Gastrocnemius medialis (tissue), 4 donors: ENCODE measurements at regions of chr4 and their contacts with region 1.

Region 1: DNA sequence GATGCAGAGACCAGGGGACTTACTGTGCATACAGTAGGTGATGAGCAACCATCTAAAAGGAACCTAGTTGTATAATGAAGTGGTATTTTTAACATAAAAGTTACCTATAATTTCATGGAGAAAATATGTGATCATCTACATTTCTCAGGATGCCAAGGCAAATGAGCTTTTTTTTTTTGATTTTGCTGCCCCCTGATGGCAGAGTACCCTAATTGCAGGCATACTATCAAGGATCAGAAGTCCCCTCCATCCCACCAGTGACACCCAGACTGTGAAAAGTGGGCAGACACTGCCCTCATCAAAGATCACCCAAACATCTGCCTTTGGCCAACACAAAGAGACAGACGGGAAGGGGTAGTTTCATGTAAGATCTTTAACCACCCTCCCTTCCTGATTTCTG is 9.6 kb upstream of the ABLIM2 start:
- DNase-seq: no peak
- ATAC-seq: no peak
- H3K4me3 ChIP-seq: no peak overlapping the region
- H3K27ac ChIP-seq: peak overlapping the region; percentile 86 to 99 (median 97)
- H3K4me1 ChIP-seq: peaks cover 47 to 50% of the 10 kb centered on the region in 2 donors
- H3K27me3 ChIP-seq: no peaks in the 10 kb centered on the region
- CTCF ChIP-seq: peak in 3 of 5 experiments; percentile 47 to 79 (median 79)
- POLR2A ChIP-seq: no peak

Region 2: GRCh38 chr4:8067945-8068896 is 100.0 kb before region 1 on chr4:
- in situ Hi-C with region 1: no loop called
- intact Hi-C with region 1: loop called (anchors 1 kb)
- DNase-seq: peak; percentile 45 to 78
- ATAC-seq: peak; percentile 59 to 63
- H3K4me3 ChIP-seq: no peak overlapping the region
- H3K27ac ChIP-seq: peak overlapping the region; percentile 89 to 95 (median 92)
- H3K4me1 ChIP-seq: peaks cover 29 to 37% of the 10 kb centered on the region in 2 donors
- H3K27me3 ChIP-seq: no peaks in the 10 kb centered on the region
- CTCF ChIP-seq: no peak
- POLR2A ChIP-seq: peak; percentile 23 to 56

Region 3: GRCh38 chr4:8127051-8127826 is 41.0 kb before region 1 on chr4:
- in situ Hi-C with region 1: no loop called
- intact Hi-C with region 1: loop called (anchors 2 kb)
- DNase-seq: peak; percentile 81 to 91
- ATAC-seq: peak; percentile 69 to 71
- H3K4me3 ChIP-seq: peak overlapping the region; percentile 67 to 78 (median 78)
- H3K27ac ChIP-seq: peak overlapping the region; percentile 93 to 100 (median 98)
- H3K4me1 ChIP-seq: peaks cover 46 to 50% of the 10 kb centered on the region in 2 donors
- H3K27me3 ChIP-seq: no peaks in the 10 kb centered on the region
- CTCF ChIP-seq: no peak
- POLR2A ChIP-seq: peak; percentile 88 to 93

Region 4: DNA sequence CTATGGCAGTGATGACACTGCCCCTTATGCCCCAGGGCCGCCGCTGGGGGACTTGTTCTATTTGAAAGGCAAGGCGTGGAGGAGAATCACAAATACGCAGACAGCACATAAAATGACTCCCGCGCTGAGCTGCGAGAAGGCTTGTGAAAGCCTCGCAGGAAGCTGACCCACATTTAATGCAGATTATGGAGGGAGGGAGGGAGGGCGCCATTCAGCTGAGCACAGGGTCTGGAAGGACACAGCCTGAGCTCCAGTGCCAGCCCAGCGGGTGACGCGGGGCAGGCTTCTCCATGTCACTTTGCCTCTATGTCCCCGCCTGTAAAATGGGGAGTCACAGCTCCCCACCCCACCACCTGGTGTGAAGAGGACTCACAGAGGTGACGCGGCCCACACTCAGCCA is 23.9 kb before region 1 on chr4:
- in situ Hi-C with region 1: no loop called
- intact Hi-C with region 1: loop called (anchors 1 kb)
- DNase-seq: peak; percentile 75 to 89
- ATAC-seq: peak; percentile 40 to 58
- H3K4me3 ChIP-seq: peak overlapping the region; percentile 2 to 30 (median 21)
- H3K27ac ChIP-seq: peak overlapping the region; percentile 94 to 99 (median 96)
- H3K4me1 ChIP-seq: peaks cover 52 to 63% of the 10 kb centered on the region in 2 donors
- H3K27me3 ChIP-seq: no peaks in the 10 kb centered on the region
- CTCF ChIP-seq: peak in 1 of 5 experiments; percentile 23
- POLR2A ChIP-seq: peak; percentile 61 to 78

Region 5: GRCh38 chr4:8188743-8189550 is 20.7 kb after region 1 on chr4:
- in situ Hi-C with region 1: no loop called
- intact Hi-C with region 1: loop called (anchors 1 kb)
- DNase-seq: peak; percentile 88 to 95
- ATAC-seq: peak; percentile 61 to 62
- H3K4me3 ChIP-seq: peak overlapping the region in 1 of 4 donors; percentile 19
- H3K27ac ChIP-seq: peak overlapping the region; percentile 89 to 94 (median 92)
- H3K4me1 ChIP-seq: peaks cover 41 to 47% of the 10 kb centered on the region in 2 donors
- H3K27me3 ChIP-seq: no peaks in the 10 kb centered on the region
- CTCF ChIP-seq: no peak
- POLR2A ChIP-seq: peak; percentile 49 to 64